Right lobe of liver (tissue), 6 donors: ENCODE measurements at regions of chr18 and their contacts with region 1.

Region 1: GRCh38 chr18:74353169-74353775 is 37.6 kb downstream of the C18orf63 start:
- DNase-seq: peak in 2 of 3 donors; percentile 30 to 77
- ATAC-seq: peak; percentile 96 to 98 (median 98)
- H3K4me3 ChIP-seq: no peak overlapping the region
- H3K27ac ChIP-seq: no peak overlapping the region
- H3K4me1 ChIP-seq: peaks cover 0 to 20% (median 0%) of the 10 kb centered on the region in 4 donors
- H3K27me3 ChIP-seq: no peaks in the 10 kb centered on the region
- CTCF ChIP-seq: peak; percentile 74 to 91 (median 78)
- POLR2A ChIP-seq: no peak

Region 2: DNA sequence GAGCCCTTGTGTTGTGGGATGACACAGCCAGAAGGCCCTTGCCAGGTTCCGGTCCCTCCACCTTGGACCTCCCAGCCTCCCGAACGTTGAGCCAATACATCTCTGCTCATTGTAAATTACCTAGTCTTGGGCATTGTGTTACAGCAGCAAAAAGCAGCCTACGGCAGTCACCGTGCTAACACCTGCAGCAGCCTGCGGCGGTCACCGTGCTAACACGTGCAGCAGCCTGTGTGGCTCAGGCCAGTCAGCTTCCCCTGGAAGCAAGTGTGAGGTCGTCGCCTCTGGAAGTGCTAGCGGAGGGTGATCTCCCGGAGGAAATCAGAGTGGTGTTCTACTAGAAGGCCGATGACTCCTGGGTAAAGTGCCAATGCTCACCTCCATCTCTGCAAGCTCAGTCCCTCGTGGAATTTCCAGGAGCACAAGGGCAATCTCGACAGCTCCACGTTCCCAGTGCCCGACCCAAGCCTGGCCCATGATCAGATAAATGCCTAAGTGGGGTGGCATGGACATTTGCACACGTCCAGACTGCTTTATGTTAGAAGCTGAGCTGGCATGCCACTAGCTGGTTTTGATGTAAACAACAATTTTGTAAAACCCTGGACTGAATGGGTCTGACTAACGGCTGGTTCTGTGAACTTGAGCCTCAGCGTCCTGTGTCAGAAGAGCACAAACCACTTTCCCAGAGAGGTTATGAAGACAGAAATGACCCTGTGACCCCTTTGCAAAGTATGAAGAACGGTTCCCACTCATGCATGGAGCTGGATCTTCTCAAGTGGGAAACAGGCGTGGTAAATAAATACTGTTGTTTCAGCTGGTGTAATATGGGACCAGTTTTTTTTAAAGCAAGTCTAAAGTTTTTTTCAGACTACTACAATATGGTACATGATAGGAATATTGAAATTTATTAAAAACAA is 169.6 kb after region 1 on chr18:
- intact Hi-C with region 1: no loop called
- DNase-seq: peak in 1 of 3 donors; percentile 42
- ATAC-seq: peak in 1 of 4 donors; percentile 8
- H3K4me3 ChIP-seq: no peak overlapping the region
- H3K27ac ChIP-seq: no peak overlapping the region
- H3K4me1 ChIP-seq: no peaks in the 10 kb centered on the region
- H3K27me3 ChIP-seq: no peaks in the 10 kb centered on the region
- CTCF ChIP-seq: no peak
- POLR2A ChIP-seq: no peak

Region 3: DNA sequence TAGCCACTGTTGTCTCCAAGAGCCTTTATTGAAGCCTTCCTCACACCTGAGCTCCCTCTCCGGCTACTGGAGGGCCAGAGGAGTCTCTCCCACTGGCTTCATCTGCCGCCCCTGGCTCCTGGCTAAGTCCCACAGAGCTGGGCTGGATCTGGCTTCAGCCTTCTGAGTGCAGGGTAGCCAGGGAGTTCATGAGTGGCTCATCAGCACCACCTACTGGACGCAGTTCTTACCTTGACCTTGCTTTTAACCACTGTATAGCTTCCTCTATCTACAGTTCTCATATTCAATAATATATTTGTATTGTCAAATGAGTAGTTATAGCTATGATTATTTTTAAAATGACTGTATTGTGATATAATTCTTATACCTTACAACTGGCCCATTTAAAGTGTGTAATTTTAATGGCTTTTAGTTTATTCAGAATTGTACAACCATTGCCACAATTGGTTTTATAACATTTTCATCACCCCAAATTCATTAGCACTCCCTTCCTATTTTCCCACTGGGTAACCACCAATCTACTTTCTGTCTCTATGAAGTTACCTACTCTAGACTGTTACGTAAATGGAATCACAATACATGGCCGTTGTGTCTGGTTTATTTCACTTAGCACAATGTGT is 198.8 kb after region 1 on chr18:
- intact Hi-C with region 1: loop called (anchors 5 kb)
- DNase-seq: peak; percentile 82 to 89 (median 82)
- ATAC-seq: peak; percentile 92 to 96 (median 94)
- H3K4me3 ChIP-seq: peak overlapping the region in 2 of 3 donors; percentile 22 to 33
- H3K27ac ChIP-seq: peak overlapping the region; percentile 23 to 69 (median 50)
- H3K4me1 ChIP-seq: peaks cover 0 to 18% (median 6%) of the 10 kb centered on the region in 4 donors
- H3K27me3 ChIP-seq: no peaks in the 10 kb centered on the region
- CTCF ChIP-seq: peak; percentile 76 to 90 (median 86)
- POLR2A ChIP-seq: no peak

Region 4: GRCh38 chr18:74652392-74652988 is 299.2 kb after region 1 on chr18:
- intact Hi-C with region 1: no loop called
- DNase-seq: no peak
- ATAC-seq: peak; percentile 61 to 74 (median 68)
- H3K4me3 ChIP-seq: no peak overlapping the region
- H3K27ac ChIP-seq: no peak overlapping the region
- H3K4me1 ChIP-seq: no peaks in the 10 kb centered on the region
- H3K27me3 ChIP-seq: no peaks in the 10 kb centered on the region
- CTCF ChIP-seq: peak; percentile 53 to 64 (median 60)
- POLR2A ChIP-seq: no peak